ENCODE measurements at regions of chr16 and their contacts with region 1.

Region 1: GRCh38 chr16:80806957-80807356 is 2.6 kb upstream of the CDYL2 start:
- DNase-seq: peak; percentile 60
- H3K4me3 Mint-ChIP-seq: no peak overlapping the region
- H3K27ac Mint-ChIP-seq: peak overlapping the region; percentile 0
- H3K4me1 Mint-ChIP-seq: peaks cover 9% of the 10 kb centered on the region
- H3K27me3 Mint-ChIP-seq: no peaks in the 10 kb centered on the region
- CTCF ChIP-seq: no peak

Region 2: GRCh38 chr16:80710918-80711317 is 96.0 kb before region 1 on chr16:
- CTCF ChIA-PET with region 1: no interaction called
- POLR2A ChIA-PET with region 1: no interaction called
- intact Hi-C with region 1: no loop called
- DNase-seq: no peak
- H3K4me3 Mint-ChIP-seq: no peak overlapping the region
- H3K27ac Mint-ChIP-seq: no peak overlapping the region
- H3K4me1 Mint-ChIP-seq: no peaks in the 10 kb centered on the region
- H3K27me3 Mint-ChIP-seq: no peaks in the 10 kb centered on the region
- CTCF ChIP-seq: no peak

Region 3: DNA sequence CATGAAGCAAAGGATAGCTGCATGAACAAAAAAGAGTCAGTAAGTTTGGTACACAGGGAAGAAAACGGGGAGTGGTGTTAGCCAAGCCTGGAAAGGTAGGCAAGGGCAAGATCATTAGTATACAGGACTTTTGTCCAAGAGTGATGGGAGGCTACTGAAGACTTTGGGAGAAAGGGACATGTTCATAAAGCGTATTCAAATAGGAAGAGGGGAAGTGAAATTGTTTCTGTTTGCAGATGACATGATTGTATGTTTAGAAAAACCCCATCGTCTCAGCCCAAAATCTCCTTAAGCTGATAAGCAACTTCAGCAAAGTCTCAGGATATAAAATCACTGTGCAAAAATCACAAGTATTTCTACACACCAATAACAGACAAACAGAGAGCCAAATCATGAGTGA is 22.0 kb before region 1 on chr16:
- CTCF ChIA-PET with region 1: no interaction called
- POLR2A ChIA-PET with region 1: no interaction called
- intact Hi-C with region 1: no loop called
- DNase-seq: no peak
- H3K4me3 Mint-ChIP-seq: no peak overlapping the region
- H3K27ac Mint-ChIP-seq: no peak overlapping the region
- H3K4me1 Mint-ChIP-seq: peaks cover 5% of the 10 kb centered on the region
- H3K27me3 Mint-ChIP-seq: no peaks in the 10 kb centered on the region
- CTCF ChIP-seq: no peak

Region 4: DNA sequence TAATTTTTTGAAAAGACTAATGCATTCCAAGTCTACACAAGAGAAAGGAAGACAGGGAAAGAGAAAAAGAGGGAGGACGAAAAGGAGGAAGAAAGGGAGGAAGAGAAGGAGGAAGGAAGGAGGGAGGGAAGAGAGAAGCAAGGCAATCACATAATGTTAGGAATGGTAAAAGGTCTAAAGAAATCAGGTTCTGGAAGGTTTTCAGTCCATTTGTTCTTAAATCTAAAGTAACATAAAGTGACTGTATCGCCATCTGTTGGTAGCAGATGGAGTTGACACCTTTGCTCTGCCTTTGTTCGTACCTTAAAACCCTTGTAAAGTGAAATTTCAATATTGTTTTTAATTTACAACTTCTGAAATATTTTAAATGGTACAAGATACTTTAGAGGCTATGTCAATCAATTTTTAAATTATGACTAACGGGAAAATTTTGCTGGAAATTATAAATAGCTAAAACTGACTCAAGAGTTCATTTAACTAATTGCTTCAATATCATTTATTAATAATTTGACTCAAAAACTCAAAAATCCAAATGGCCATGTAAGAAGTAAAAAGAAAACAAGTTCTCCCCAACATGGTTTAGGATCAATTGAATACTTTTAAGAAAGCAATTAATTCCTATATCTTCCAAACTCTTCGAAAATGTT is 17.9 kb after region 1 on chr16:
- CTCF ChIA-PET with region 1: interaction called, 21 read pairs
- POLR2A ChIA-PET with region 1: interaction called, 3 read pairs
- intact Hi-C with region 1: no loop called
- DNase-seq: peak; percentile 57
- H3K4me3 Mint-ChIP-seq: no peak overlapping the region
- H3K27ac Mint-ChIP-seq: no peak overlapping the region
- H3K4me1 Mint-ChIP-seq: no peaks in the 10 kb centered on the region
- H3K27me3 Mint-ChIP-seq: peaks cover 32% of the 10 kb centered on the region
- CTCF ChIP-seq: peak; percentile 73